Activated naive CD4-positive, alpha-beta T cell treated with anti-CD3 and anti-CD28 coated beads for 36 hours (primary cell): ENCODE measurements at regions of chr12 and their contacts with region 1.

Region 1: DNA sequence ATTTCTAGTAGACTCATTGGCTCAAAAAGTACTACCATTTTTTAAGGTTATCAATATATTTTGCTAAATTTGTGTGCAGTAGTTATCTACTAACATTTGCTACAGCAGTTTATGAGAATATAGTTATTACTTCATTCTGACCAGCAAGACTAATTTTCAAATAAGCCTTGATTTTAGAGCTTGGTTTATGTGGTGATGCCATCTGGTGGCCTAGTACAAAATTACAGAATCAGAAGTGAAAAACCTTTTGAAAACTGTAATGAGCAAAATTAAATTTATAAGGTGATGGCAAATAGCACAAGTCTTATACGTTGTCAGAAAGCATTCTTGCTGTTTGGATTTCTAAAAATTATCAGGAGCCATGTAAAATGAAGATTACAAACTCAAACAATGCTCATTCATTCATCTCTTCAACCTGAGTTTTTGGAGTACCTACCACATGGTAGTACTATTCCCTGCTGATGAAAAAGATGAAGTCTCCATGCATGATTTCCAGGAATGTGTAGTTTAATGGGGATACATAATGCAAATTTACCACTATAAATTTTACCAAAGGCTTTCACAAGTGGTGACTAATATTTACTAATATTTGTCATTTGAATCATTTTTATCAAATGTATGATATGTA is 51.0 kb downstream of the MAGOHB start:
- DNase-seq: peak; percentile 36
- H3K4me3 Mint-ChIP-seq: no peak overlapping the region
- H3K27ac Mint-ChIP-seq: no peak overlapping the region
- H3K4me1 Mint-ChIP-seq: peaks cover 5% of the 10 kb centered on the region
- H3K27me3 Mint-ChIP-seq: peaks cover 15% of the 10 kb centered on the region

Region 2: DNA sequence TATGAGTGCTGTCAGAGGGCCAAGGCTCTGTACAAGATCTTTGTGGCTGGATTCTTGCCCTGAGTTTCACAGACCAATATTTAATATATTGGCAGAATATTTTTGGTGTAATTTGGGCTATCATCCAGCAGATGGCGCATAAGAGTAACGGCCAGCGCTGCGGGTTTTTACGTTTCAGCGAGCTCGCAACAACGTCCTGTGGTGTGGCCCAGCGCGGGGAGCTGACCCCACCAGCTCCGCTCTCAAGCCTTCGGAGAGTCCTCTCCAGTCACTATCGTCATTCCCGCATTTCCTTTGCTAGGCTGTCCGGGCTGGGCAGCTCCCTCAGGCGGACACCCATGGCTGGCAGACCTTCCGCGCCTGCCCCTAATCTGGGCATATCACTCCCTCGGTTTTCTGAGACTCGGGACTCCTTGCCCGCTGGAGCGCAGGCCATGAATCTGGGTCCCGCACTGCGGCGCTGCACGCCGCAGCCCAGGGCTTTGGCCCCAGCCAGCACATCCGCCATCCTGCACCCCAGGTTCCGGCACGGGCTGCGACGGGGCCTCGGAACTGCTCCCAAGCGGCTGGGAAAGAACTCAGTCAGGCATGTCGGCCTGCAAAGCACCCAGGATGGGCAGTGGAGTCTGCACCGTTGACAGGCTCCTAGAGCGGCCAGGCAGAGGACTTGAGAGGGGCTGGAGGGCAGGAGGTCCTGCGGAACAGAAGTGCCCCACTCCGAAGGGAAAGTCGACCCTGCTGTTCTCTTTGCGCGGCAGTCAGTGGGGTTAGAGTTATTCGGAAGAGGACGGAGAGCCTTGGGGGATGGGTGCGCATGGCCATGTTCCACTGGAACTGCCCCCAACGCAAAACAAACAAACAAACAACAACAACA is 408.9 kb before region 1 on chr12:
- CTCF ChIA-PET with region 1: interaction called, 5 read pairs
- intact Hi-C with region 1: loop called (anchors 1 kb)
- DNase-seq: peak; percentile 66
- H3K4me3 Mint-ChIP-seq: peak overlapping the region; percentile 76
- H3K27ac Mint-ChIP-seq: peak overlapping the region; percentile 63
- H3K4me1 Mint-ChIP-seq: peaks cover 10% of the 10 kb centered on the region
- H3K27me3 Mint-ChIP-seq: peaks cover 18% of the 10 kb centered on the region

Region 3: GRCh38 chr12:10331642-10332239 is 230.7 kb before region 1 on chr12:
- CTCF ChIA-PET with region 1: interaction called, 12 read pairs
- intact Hi-C with region 1: loop called (anchors 1 kb)
- DNase-seq: no peak
- H3K4me3 Mint-ChIP-seq: no peak overlapping the region
- H3K27ac Mint-ChIP-seq: no peak overlapping the region
- H3K4me1 Mint-ChIP-seq: no peaks in the 10 kb centered on the region
- H3K27me3 Mint-ChIP-seq: peaks cover 4% of the 10 kb centered on the region

Region 4: GRCh38 chr12:10613349-10614055 is 51.1 kb after region 1 on chr12 and contains the start of gene MAGOHB:
- CTCF ChIA-PET with region 1: no interaction called
- intact Hi-C with region 1: no loop called
- DNase-seq: peak; percentile 99
- H3K4me3 Mint-ChIP-seq: peak within 1 kb of the TSS; percentile 99
- H3K27ac Mint-ChIP-seq: peak within 1 kb of the TSS; percentile 99
- H3K4me1 Mint-ChIP-seq: peaks cover 30% of the 10 kb centered on the region
- H3K27me3 Mint-ChIP-seq: peaks cover 2% of the 10 kb centered on the region
- total RNA-seq, gene MAGOHB: 58.8 to 61.1 TPM

Region 5: DNA sequence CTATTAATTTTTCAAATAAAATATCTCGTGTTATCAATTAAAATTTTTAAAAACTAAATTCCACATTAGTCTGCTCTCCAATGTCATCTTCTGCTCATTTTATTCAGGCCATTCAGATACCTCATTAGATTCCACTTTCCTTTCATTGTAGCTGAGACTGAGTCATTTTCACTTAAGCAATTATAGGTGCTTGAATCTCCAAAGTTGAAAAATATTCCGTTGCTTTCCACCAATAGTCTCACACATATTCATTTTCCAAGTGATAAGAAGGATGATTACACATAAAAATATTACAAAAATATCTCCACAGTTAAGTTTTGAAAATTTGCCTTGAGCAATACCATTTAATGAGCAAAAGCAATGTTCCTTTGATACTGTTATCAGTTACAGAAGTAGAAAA is 197.2 kb after region 1 on chr12:
- CTCF ChIA-PET with region 1: no interaction called
- intact Hi-C with region 1: no loop called
- DNase-seq: no peak
- H3K4me3 Mint-ChIP-seq: no peak overlapping the region
- H3K27ac Mint-ChIP-seq: no peak overlapping the region
- H3K4me1 Mint-ChIP-seq: no peaks in the 10 kb centered on the region
- H3K27me3 Mint-ChIP-seq: peaks cover 44% of the 10 kb centered on the region